Ascending aorta (tissue), 2 donors: ENCODE measurements at regions of chr1 and their contacts with region 1.

Region 1: GRCh38 chr1:8873506-8874229 is 4.8 kb downstream of the ENO1 start:
- DNase-seq: peak; percentile 85 to 95
- H3K4me3 ChIP-seq: peak overlapping the region in 1 of 2 donors; percentile 38
- H3K27ac ChIP-seq: peak overlapping the region; percentile 45 to 96
- H3K4me1 ChIP-seq: peaks cover 27 to 43% of the 10 kb centered on the region in 2 donors
- H3K27me3 ChIP-seq: no peaks in the 10 kb centered on the region
- CTCF ChIP-seq: no peak

Region 2: DNA sequence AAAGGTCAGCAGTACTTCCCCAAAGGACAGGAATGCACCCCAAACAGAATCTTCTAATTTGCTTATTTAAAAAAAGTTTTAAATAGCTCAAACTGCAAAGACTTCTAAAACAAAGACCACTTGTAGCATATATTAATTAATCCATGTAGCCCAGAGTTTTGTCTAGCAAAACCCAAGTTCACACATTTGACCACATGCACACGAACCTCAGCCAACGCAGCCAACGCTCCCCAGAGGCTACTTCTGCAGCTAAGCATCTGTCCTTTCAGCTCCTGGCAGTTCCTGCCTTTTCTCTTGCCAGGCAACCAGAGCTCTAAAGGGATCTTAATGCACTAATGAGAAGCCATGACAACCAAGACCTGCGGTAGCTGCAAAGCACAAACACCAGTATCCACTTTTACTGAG is 145.9 kb before region 1 on chr1:
- intact Hi-C with region 1: no loop called
- DNase-seq: no peak
- H3K4me3 ChIP-seq: no peak overlapping the region
- H3K27ac ChIP-seq: no peak overlapping the region
- H3K4me1 ChIP-seq: no peaks in the 10 kb centered on the region
- H3K27me3 ChIP-seq: no peaks in the 10 kb centered on the region
- CTCF ChIP-seq: no peak

Region 3: DNA sequence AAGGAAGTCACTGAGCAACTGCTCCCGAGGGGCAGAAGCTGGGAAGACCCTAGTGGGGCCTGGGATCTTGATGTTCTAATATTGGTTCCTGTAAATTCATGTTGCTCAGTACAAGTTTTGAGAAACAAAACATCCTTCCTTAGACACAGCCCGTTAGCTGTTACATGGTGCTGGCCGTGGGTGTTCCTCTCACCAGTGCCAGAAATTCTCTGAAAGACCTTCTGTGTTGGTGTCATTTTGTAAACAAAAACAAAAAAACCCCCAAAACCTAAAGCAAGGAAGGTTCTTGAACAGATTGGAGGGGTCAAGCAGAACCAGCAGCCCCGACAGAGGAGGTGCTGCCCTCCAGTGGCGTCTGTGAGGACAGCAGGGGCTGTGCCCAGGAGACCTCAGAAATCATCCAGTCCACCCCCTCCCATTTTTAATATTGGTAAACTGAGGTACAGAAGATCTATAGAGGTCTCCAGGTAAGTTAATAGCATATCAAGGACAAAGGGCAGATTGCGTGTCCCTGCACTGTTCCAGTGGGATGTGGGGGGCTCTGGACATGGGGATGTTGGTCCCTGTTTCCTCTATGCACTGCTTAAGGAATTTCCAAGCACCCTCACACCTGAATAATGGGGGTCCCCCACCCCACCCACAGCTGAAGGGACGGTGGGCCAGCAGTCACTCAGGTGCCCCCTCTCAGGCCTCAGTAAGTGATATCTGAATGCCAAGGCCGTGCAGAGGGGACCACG is 114.4 kb after region 1 on chr1:
- intact Hi-C with region 1: loop called (anchors 5 kb)
- DNase-seq: no peak
- H3K4me3 ChIP-seq: no peak overlapping the region
- H3K27ac ChIP-seq: peak overlapping the region in 1 of 2 donors; percentile 6
- H3K4me1 ChIP-seq: peaks cover 0 to 10% of the 10 kb centered on the region in 2 donors
- H3K27me3 ChIP-seq: no peaks in the 10 kb centered on the region
- CTCF ChIP-seq: peak; percentile 86 to 95 (median 88)